K562 (cell line): ENCODE measurements at regions of chr2 and their contacts with region 1.

Region 1: DNA sequence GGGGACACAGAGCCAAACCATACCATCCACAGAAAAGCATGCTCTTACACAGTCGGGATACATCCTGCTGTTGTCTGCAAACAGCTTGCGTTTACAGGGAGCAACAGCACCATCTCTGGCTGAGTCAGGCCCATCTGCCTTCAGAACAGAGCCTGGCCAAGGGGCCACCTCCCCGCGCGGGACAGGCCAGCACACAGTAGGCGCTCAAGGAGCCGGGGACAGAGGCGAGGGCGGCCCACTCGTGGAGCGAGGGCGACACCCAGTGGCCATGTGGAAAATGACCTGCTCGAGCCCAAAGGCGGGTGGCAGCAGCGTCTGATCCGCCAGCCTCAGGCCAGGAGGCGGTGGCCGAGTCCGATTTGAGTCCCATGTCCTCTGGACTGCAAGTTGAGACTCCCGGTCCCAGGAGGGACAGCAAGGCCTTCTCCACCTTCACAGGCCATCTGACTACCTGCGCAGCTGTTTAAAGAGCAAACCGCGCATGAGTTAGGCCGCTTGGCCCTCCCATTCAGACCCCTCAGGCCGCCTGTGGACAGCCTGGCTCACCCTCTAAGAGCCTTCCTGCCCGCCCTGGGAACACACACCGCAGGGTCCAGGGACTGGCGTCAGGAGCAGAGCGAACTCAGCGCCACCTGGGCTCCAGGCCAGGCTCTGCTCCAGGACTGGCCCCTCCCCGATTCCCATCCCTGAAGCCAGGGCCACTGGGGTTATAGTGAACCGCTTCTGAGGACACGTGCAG is 38.3 kb downstream of the TTC32 start:
- DNase-seq: peak; percentile 74 to 84 (median 80)
- ATAC-seq: peak; percentile 94
- H3K4me3 ChIP-seq: no peak overlapping the region
- H3K27ac ChIP-seq: no peak overlapping the region
- H3K4me1 ChIP-seq: peaks cover 4 to 9% of the 10 kb centered on the region in 2 experiments; a peak in 3 of 5 replicates
- H3K27me3 ChIP-seq: peaks cover 18 to 41% of the 10 kb centered on the region in 2 experiments
- CTCF ChIP-seq: peak; percentile 90 to 93 (median 93)
- EP300 ChIP-seq: no peak
- POLR2A ChIP-seq: no peak
- RAD21 ChIP-seq: peak; percentile 97

Region 2: DNA sequence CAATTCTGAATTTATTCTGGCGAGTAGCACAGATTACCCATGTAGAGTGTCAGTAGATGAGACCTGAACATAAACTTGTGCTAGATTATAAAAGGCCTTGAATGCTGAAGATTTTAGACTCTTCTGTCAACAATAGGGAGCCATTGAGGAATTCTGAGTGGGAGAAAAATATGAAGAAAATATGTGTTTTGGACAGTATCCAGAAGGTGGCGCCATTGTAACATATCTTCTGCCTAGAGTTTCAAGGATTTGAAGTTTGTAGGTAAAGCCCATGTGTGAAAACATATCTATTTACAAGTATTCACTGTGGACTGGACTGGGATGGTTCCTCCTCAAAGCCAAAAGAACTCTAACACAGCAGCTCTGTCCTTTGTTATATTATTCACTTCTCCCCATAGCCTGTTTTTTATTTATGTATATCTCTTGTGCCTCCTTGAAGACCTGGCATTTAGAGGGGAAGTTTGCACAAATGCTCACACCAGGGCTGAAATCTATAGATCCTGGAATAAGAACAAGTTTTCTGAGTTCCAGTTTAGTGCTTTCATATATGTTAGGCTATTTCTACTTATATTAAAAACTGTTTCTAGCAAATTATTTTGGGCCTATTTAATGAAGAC is 1427.9 kb before region 1 on chr2:
- CTCF ChIA-PET with region 1: no interaction called
- POLR2A ChIA-PET with region 1: no interaction called
- in situ Hi-C with region 1: loop called (anchors 5 kb)
- intact Hi-C with region 1: loop called (anchors 2 kb)
- DNase-seq: peak in 2 of 4 experiments; percentile 20 to 63
- ATAC-seq: peak; percentile 75
- H3K4me3 ChIP-seq: no peak overlapping the region
- H3K27ac ChIP-seq: no peak overlapping the region
- H3K4me1 ChIP-seq: no peaks in the 10 kb centered on the region
- H3K27me3 ChIP-seq: no peaks in the 10 kb centered on the region
- CTCF ChIP-seq: peak; percentile 10 to 76 (median 37); a peak in 3 of 6 replicates
- EP300 ChIP-seq: no peak
- POLR2A ChIP-seq: no peak
- RAD21 ChIP-seq: peak; percentile 66 to 83

Region 3: GRCh38 chr2:18749912-18750526 is 1113.5 kb before region 1 on chr2:
- CTCF ChIA-PET with region 1: interaction called, 3 read pairs
- POLR2A ChIA-PET with region 1: no interaction called
- in situ Hi-C with region 1: loop called (anchors 25 kb)
- intact Hi-C with region 1: loop called (anchors 5 kb)
- DNase-seq: peak in 3 of 4 experiments; percentile 10 to 51 (median 17)
- ATAC-seq: no peak
- H3K4me3 ChIP-seq: no peak overlapping the region
- H3K27ac ChIP-seq: no peak overlapping the region
- H3K4me1 ChIP-seq: no peaks in the 10 kb centered on the region
- H3K27me3 ChIP-seq: no peaks in the 10 kb centered on the region
- CTCF ChIP-seq: peak in 2 of 3 experiments; percentile 31 to 62; a peak in 3 of 6 replicates
- EP300 ChIP-seq: no peak
- POLR2A ChIP-seq: no peak
- RAD21 ChIP-seq: peak; percentile 74 to 76

Region 4: GRCh38 chr2:19362755-19363473 is 500.6 kb before region 1 on chr2:
- CTCF ChIA-PET with region 1: interaction called, 3 read pairs
- POLR2A ChIA-PET with region 1: no interaction called
- in situ Hi-C with region 1: loop called (anchors 10 kb)
- intact Hi-C with region 1: loop called (anchors 5 kb)
- DNase-seq: peak; percentile 72 to 79 (median 73)
- ATAC-seq: peak; percentile 93
- H3K4me3 ChIP-seq: 0 out of 2 replicates have a peak overlapping the region, but pooled peaks have one; percentile 14
- H3K27ac ChIP-seq: no peak overlapping the region
- H3K4me1 ChIP-seq: peaks cover 0 to 11% of the 10 kb centered on the region in 2 experiments; a peak in 1 of 5 replicates
- H3K27me3 ChIP-seq: peaks cover 24 to 43% of the 10 kb centered on the region in 2 experiments; a peak in 4 of 5 replicates
- CTCF ChIP-seq: peak; percentile 68 to 79 (median 77)
- EP300 ChIP-seq: no peak
- POLR2A ChIP-seq: no peak
- RAD21 ChIP-seq: peak; percentile 80

Region 5: GRCh38 chr2:19746611-19747309 is 116.7 kb before region 1 on chr2:
- CTCF ChIA-PET with region 1: no interaction called
- POLR2A ChIA-PET with region 1: no interaction called
- in situ Hi-C with region 1: no loop called
- intact Hi-C with region 1: loop called (anchors 10 kb)
- DNase-seq: peak; percentile 12 to 41 (median 34)
- ATAC-seq: peak; percentile 66
- H3K4me3 ChIP-seq: no peak overlapping the region
- H3K27ac ChIP-seq: no peak overlapping the region
- H3K4me1 ChIP-seq: no peaks in the 10 kb centered on the region
- H3K27me3 ChIP-seq: peaks cover 0 to 17% of the 10 kb centered on the region in 2 experiments; a peak in 3 of 5 replicates
- CTCF ChIP-seq: peak; percentile 13 to 36 (median 31); a peak in 4 of 6 replicates
- EP300 ChIP-seq: no peak
- POLR2A ChIP-seq: no peak
- RAD21 ChIP-seq: peak in 1 of 2 experiments; percentile 21; a peak in 1 of 4 replicates